ENCODE measurements at regions of chr15 and their contacts with region 1.

Region 1: GRCh38 chr15:41283653-41284426 is 48.6 kb downstream of the OIP5 start:
- DNase-seq: peak; percentile 94 to 100 (median 97)
- ATAC-seq: peak; percentile 96
- H3K4me3 ChIP-seq: peak overlapping the region; percentile 70 to 86
- H3K4me3 Mint-ChIP-seq: peak overlapping the region; percentile 89
- H3K27ac ChIP-seq: peak overlapping the region; percentile 91 to 93
- H3K27ac Mint-ChIP-seq: peak overlapping the region; percentile 95
- H3K4me1 ChIP-seq: peaks cover 25% of the 10 kb centered on the region
- H3K4me1 Mint-ChIP-seq: peaks cover 48% of the 10 kb centered on the region
- H3K27me3 ChIP-seq: no peaks in the 10 kb centered on the region
- H3K27me3 Mint-ChIP-seq: no peaks in the 10 kb centered on the region
- CTCF ChIP-seq: no peak

Region 2: DNA sequence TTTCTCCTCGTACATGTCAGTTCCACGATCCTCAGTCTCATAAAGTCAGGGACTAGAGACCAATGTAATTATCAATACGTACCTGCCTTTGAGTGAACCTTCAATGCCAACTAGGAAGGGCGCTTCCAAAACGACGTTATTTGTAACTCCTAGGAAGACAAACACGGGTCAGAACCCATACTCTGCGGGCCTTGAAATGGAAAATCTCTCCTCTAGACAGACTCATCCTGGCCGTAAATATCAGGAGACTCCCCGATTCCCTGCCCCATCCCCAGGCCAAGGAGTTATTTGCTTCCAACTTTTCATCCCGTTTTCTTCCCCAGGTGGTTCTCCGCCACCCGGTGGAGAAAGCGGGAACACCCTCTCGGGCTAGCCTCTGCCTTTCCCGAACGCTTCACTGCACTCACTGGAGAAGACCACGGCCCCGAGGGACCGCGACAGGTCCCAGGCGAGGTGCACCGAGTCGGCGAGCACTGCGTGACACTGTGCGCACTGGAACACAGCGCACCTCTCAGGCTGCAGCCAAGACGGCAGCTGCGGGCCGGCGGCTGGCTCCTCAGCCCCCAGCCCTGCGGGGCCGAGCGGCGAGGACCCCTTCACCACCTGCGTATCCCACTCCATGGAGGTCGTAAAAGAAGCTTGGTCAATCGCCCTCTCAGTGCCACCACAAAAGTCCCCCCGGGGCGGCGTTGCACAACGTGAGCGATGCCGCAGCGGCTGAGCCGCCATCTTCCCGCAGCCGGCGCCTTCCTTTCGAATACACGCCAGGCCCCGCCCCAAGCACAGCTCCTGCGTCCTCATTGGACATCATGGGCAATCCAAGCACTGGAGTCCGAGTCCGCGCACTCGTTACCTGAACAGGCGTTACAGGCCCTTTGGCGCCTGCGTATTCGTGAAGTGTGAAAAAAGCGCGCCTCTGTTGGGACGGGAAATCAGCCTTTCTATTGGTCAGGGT is 48.3 kb after region 1 on chr15 and contains the start of gene OIP5:
- CTCF ChIA-PET with region 1: no interaction called
- POLR2A ChIA-PET with region 1: interaction called, 11 read pairs
- intact Hi-C with region 1: loop called (anchors 1 kb)
- DNase-seq: peak; percentile 95 to 100 (median 96)
- ATAC-seq: peak; percentile 96
- H3K4me3 ChIP-seq: peak within 1 kb of the TSS; percentile 84 to 94
- H3K4me3 Mint-ChIP-seq: peak within 1 kb of the TSS; percentile 97
- H3K27ac ChIP-seq: peak within 1 kb of the TSS; percentile 46 to 63
- H3K27ac Mint-ChIP-seq: peak within 1 kb of the TSS; percentile 87
- H3K4me1 ChIP-seq: peaks cover 14% of the 10 kb centered on the region
- H3K4me1 Mint-ChIP-seq: peaks cover 30% of the 10 kb centered on the region
- H3K27me3 ChIP-seq: no peaks in the 10 kb centered on the region
- H3K27me3 Mint-ChIP-seq: no peaks in the 10 kb centered on the region
- CTCF ChIP-seq: peak; percentile 58
- total RNA-seq, gene OIP5: not detected